ENCODE measurements at regions of chr10 and their contacts with region 1.

Region 1: DNA sequence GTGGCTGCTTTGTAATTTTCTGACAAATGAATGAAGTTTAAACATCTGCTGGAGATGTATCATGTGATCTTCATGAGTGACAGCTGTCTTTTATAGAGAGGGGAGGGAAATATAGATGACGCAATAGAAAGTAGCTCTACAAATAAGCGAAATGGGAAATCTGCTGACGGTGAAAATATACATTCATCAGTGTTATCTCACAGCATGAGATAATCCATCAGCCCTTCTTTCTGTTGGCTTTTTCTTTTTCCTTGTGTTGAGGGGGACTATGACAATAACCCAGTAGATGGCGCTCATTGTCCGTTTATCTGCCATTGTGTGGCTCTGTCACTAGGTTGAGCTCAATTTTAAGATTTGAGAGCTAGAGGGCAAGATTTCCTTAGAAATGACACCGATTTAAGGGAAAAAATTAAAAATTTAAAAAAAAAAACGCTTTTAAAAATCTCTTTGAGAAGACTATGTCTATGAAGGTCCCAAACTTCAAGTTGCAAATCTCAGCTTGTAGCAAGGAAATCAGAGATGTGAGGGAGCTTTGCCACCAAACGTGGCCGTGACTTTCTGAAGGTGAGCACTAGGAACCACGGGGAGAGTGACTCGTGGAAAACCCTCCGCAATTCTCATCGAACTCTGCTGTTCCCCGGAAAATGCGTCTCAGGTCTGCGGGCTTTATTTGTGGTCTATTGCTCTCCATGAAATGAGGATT is 114.6 kb upstream of the SFMBT2 start:
- DNase-seq: peak; percentile 85
- H3K4me3 ChIP-seq: peak overlapping the region; percentile 13
- H3K27ac ChIP-seq: no peak overlapping the region
- H3K4me1 ChIP-seq: peaks cover 7% of the 10 kb centered on the region
- H3K27me3 ChIP-seq: no peaks in the 10 kb centered on the region
- CTCF ChIP-seq: peak; percentile 91

Region 2: DNA sequence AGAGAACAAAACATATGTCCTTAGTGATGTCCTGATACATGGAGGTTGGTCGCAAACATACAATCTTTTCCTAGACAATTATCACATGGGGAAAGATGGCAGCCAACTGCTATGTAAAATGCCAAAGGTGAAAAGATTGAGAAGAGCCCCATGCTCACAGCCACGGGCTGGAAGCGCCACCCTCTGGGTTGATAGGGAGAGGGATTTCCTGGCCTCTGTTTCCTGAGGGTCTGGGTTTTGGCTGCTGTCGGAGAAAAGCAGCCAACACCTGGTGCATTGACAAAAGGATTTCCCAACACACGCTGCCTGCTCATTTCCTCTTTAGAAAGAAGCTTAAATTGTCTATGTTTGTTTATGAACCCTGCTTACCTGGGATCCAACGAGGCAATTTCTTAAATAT is 97.5 kb after region 1 on chr10:
- CTCF ChIA-PET with region 1: interaction called, 4 read pairs
- POLR2A ChIA-PET with region 1: no interaction called
- intact Hi-C with region 1: loop called (anchors 2 kb)
- DNase-seq: peak; percentile 23
- H3K4me3 ChIP-seq: no peak overlapping the region
- H3K27ac ChIP-seq: no peak overlapping the region
- H3K4me1 ChIP-seq: peaks cover 13% of the 10 kb centered on the region
- H3K27me3 ChIP-seq: peaks cover 22% of the 10 kb centered on the region
- CTCF ChIP-seq: peak; percentile 46

Region 3: GRCh38 chr10:7756360-7756992 is 231.0 kb after region 1 on chr10:
- CTCF ChIA-PET with region 1: interaction called, 10 read pairs
- POLR2A ChIA-PET with region 1: no interaction called
- intact Hi-C with region 1: loop called (anchors 10 kb)
- DNase-seq: peak; percentile 37
- H3K4me3 ChIP-seq: no peak overlapping the region
- H3K27ac ChIP-seq: no peak overlapping the region
- H3K4me1 ChIP-seq: no peaks in the 10 kb centered on the region
- H3K27me3 ChIP-seq: no peaks in the 10 kb centered on the region
- CTCF ChIP-seq: peak; percentile 62

Region 4: DNA sequence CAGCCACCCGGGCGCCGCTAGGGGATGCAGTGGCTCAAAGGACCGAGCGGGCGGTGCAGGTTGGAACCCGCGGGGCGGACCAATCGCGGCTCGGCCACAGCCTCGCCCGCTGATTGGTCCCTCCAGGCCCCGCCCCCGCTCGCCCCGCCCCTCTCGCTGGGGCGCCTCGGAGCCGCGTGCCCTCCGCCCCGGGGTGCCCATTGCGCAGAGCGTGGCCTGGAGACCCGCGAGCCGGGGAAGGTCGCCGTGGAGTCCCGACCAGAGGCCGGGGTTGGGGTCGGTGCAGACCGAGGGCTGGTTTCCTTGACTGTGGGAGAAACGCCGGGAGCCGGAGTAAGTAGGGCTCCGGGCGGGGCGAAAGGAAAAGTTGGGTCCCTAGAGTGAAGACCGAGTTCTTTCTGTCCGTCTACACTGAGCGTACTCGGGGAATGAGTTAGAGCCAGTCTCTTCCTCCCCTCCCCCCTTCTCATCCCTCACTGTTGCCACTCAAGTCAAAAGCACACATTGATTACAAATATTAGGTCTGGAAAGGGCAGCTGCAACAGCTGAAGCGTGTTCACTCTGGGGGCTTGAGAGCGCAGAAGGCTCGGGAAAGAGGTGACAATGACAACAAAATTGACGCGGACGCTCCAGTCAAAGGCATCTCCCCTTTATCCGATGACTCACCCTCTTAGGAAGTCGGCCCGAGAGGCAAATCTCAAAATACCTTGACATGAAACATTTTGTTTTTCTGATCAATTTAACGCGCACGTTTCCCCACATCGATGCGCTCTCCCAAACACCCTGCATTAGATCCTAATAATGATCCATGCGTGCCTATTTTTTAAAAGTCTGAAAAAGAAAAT is 528.2 kb after region 1 on chr10:
- CTCF ChIA-PET with region 1: no interaction called
- POLR2A ChIA-PET with region 1: no interaction called
- intact Hi-C with region 1: loop called (anchors 5 kb)
- DNase-seq: peak; percentile 92
- H3K4me3 ChIP-seq: peak overlapping the region; percentile 55
- H3K27ac ChIP-seq: peak overlapping the region; percentile 22
- H3K4me1 ChIP-seq: peaks cover 22% of the 10 kb centered on the region
- H3K27me3 ChIP-seq: peaks cover 47% of the 10 kb centered on the region
- CTCF ChIP-seq: no peak

Region 5: DNA sequence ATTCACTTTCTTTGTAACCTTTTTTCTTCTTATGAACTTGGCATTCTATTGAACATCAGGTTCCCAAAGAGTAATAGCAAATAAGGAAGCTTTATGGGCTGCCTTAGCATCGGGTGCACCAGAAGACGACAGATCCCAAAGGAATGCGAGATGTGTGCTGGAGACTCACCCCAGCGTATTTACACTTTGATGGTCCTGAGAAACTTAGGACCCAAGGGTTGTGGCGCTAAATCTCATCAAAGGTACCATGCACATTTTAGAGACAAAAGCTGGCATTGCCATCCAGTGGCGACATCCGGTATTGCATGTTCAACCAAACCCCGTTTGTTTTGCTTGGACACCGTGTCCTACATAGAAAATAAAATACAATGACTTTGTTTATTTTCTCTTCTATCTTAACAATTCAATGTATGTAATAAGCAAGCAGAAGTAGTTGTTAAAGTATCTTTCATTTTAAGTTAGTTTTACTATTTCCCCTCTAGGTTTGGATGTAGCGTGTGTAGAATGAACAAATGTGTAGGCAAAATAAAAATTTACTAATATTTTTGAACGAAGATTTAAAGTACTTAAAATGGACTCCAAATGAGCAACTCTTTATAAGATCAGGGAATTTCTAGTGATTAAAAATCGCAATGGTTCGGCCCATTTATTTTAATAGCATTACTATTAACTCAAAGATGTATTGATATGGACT is 1683.8 kb after region 1 on chr10:
- CTCF ChIA-PET with region 1: interaction called, 10 read pairs
- POLR2A ChIA-PET with region 1: no interaction called
- intact Hi-C with region 1: loop called (anchors 10 kb)
- DNase-seq: peak; percentile 70
- H3K4me3 ChIP-seq: no peak overlapping the region
- H3K27ac ChIP-seq: no peak overlapping the region
- H3K4me1 ChIP-seq: no peaks in the 10 kb centered on the region
- H3K27me3 ChIP-seq: no peaks in the 10 kb centered on the region
- CTCF ChIP-seq: peak; percentile 88

Measured in A673 (cell line).